Heart right ventricle (tissue), 16 donors: ENCODE measurements at regions of chr6 and their contacts with region 1.

Region 1: DNA sequence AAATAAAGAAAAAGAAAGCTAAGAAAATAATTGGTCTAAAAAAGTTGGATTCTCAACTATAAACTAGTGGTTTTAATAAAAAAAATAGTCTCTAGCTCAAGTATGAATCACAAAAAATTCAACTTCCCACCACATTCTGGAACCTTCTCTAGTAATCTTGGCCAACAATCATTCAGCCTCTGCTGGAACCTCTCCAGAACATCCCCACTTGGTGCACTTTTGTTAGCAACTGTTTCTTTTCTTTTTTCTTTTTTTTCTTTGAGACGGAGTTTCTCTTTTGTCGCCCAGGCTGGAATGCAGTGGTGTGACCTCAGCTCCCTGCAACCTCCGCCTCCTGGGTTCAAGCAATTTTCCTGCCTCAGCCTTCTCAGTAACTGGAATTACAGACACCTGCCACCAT is 35.7 kb downstream of the TXLNB start:
- DNase-seq: peak in 1 of 2 donors; percentile 50
- ATAC-seq: peak in 1 of 8 donors; percentile 12
- H3K4me3 ChIP-seq: no peak overlapping the region
- H3K27ac ChIP-seq: peak overlapping the region in 7 of 10 donors; percentile 20 to 70 (median 47)
- H3K4me1 ChIP-seq: peaks cover 10 to 36% (median 21%) of the 10 kb centered on the region in 9 donors
- H3K27me3 ChIP-seq: no peaks in the 10 kb centered on the region
- CTCF ChIP-seq: no peak

Region 2: GRCh38 chr6:139044250-139044649 is 211.8 kb before region 1 on chr6:
- intact Hi-C with region 1: loop called in 1 of 10 experiments (anchors 5 kb)
- DNase-seq: no peak
- ATAC-seq: no peak
- H3K4me3 ChIP-seq: no peak overlapping the region
- H3K27ac ChIP-seq: no peak overlapping the region
- H3K4me1 ChIP-seq: no peaks in the 10 kb centered on the region
- H3K27me3 ChIP-seq: no peaks in the 10 kb centered on the region
- CTCF ChIP-seq: no peak